Aorta (tissue), 5 donors: ENCODE measurements at regions of chr2 and their contacts with region 1.

Region 1: GRCh38 chr2:226984750-226985582 is 149.1 kb downstream of the RHBDD1 start:
- DNase-seq: no peak
- ATAC-seq: peak; percentile 86
- H3K4me3 ChIP-seq: no peak overlapping the region
- H3K27ac ChIP-seq: peak overlapping the region in 1 of 2 donors; percentile 6
- H3K4me1 ChIP-seq: peaks cover 0 to 2% of the 10 kb centered on the region in 2 donors
- H3K27me3 ChIP-seq: no peaks in the 10 kb centered on the region

Region 2: GRCh38 chr2:225889446-225889850 is 1095.5 kb before region 1 on chr2:
- intact Hi-C with region 1: loop called (anchors 2 to 5 kb)
- DNase-seq: no peak
- ATAC-seq: peak; percentile 77
- H3K4me3 ChIP-seq: no peak overlapping the region
- H3K27ac ChIP-seq: no peak overlapping the region
- H3K4me1 ChIP-seq: no peaks in the 10 kb centered on the region
- H3K27me3 ChIP-seq: no peaks in the 10 kb centered on the region

Region 3: DNA sequence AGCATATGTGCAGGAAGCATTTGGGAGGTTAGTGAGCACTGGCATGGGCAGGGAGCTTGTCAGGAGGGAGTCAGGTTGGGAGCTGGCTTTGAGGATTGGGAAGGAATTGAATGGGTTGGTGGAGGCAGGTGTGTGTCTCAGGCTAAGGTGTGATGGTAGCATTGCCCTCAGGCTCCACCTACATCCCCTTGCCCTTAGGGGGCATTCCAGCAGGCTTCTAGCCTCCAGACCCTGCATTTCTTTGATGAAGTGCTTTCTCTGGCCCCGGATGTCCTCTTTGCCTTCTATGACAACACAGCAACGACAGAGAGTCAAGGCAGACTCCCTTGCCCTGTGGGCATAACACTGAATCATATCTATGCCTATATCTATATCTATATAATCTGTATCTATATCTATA is 135.6 kb before region 1 on chr2:
- intact Hi-C with region 1: no loop called
- DNase-seq: no peak
- ATAC-seq: no peak
- H3K4me3 ChIP-seq: no peak overlapping the region
- H3K27ac ChIP-seq: no peak overlapping the region
- H3K4me1 ChIP-seq: no peaks in the 10 kb centered on the region
- H3K27me3 ChIP-seq: no peaks in the 10 kb centered on the region